ENCODE measurements at regions of chr16 and their contacts with region 1.

Region 1: GRCh38 chr16:22077700-22078313 is 14.5 kb upstream of the VWA3A start:
- DNase-seq: peak in 4 of 5 donors; percentile 49 to 66 (median 58)
- H3K4me3 ChIP-seq: no peak overlapping the region
- H3K27ac ChIP-seq: no peak overlapping the region
- H3K4me1 ChIP-seq: no peaks in the 10 kb centered on the region
- H3K27me3 ChIP-seq: no peaks in the 10 kb centered on the region
- CTCF ChIP-seq: peak; percentile 66

Region 2: DNA sequence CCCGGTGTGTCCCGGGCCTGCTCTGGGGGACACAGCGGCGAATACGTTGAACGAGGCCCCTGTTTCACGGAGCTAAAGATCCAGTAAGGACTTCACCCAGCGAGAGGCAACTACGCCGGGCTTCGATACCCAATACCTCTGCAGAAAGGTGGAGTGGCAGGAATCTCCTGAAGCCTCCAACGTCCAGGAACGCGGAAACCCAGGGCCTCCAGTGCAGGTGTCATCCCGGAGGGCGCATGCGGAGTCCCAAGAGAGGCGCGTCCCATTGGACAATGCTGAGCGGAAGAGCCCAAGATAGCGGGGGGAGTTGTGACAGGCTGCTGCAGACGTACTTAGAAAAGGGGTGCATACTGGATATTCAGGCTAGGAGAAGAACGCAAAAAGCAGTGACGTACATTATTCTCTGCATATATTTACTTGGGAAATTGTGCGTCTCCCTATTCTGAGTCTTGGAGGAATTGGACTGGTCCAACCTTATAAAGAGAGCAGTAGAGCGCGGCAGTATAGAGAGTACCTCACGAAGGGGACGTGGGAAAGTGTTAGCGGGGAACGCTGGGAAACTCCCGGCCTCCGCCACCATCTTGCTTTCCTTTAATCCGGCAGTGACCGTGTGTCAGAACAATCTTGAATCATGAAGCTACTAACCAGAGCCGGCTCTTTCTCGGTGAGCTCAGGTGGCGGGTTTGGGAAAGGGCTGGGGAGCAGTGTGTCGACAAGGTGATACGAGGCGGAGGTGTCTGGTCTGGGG is 124.8 kb before region 1 on chr16 and contains the start of gene UQCRC2:
- intact Hi-C with region 1: no loop called
- DNase-seq: peak; percentile 90 to 98 (median 95)
- H3K4me3 ChIP-seq: peak within 1 kb of the TSS; percentile 74 to 99 (median 95)
- H3K27ac ChIP-seq: peak within 1 kb of the TSS; percentile 96 to 98
- H3K4me1 ChIP-seq: peaks cover 4 to 20% (median 6%) of the 10 kb centered on the region in 3 donors
- H3K27me3 ChIP-seq: no peaks in the 10 kb centered on the region
- CTCF ChIP-seq: no peak
- total RNA-seq, gene UQCRC2: 199 TPM

Region 3: DNA sequence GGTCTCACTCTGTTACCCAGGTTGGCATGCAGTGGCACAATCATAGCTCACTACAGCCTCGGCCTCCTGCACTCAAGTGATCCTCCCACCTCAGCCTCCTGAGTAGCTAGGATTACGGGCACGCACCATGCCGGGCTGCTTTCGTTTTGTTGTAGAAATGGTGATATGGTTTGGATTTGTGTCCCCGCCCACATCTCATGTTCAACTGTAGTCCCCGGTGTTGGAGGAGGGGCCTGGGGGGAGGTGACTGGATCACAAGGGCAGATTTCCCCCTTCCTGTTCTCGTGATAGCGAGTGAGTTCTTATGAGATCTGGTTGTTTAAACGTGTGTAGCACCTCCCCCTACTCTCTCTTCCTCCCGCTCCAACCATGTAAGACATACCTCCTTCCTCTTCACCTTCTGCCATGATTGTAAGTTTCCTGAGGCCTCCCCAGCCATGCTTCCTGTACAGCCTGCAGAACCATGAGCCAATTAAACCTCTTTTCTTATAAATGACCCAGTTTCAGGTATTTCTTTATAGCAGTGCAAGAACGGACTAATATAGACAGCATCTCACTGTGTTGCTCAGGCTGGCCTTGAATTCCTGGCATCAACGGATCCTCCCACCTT is 82.8 kb before region 1 on chr16:
- intact Hi-C with region 1: no loop called
- DNase-seq: no peak
- H3K4me3 ChIP-seq: no peak overlapping the region
- H3K27ac ChIP-seq: no peak overlapping the region
- H3K4me1 ChIP-seq: no peaks in the 10 kb centered on the region
- H3K27me3 ChIP-seq: no peaks in the 10 kb centered on the region
- CTCF ChIP-seq: no peak

Region 4: DNA sequence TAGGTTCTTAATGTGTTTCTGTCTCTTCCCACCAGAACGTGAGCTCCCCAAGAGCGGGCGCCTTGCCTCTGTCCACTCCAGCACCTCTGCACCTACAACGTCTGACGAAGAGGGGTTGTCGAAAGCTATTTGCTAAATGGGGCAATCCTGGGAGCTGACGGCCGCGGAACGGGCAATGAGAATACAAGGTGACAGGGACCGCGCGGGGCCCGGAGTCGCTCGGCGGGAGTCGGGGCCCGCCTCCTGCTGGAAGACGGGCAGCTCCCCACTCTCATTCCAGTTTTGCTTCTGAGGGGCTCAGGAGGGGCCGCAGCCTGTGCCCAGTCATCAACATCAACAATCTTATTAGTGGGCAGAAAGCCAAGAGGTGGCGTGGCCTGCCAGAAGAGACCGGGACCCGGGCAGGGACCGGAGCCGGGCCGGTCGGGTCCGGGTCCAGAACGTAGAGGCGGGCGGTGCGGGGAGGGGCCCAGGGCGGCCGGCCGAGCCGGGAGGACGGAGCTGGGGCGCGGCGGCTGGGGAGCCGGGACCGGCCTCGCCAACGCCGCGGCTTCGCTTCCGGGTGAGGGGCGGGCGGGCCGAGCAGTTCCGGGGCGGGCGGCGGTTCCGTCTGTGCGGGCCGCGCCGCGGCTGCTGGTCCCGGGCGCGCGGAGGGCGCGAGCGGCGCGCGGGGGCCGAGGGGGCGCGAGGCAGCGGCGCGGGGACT is 70.1 kb before region 1 on chr16 and contains the start of gene MOSMO:
- intact Hi-C with region 1: loop called (anchors 5 kb)
- DNase-seq: peak; percentile 59 to 88 (median 73)
- H3K4me3 ChIP-seq: peak within 1 kb of the TSS; percentile 49 to 79 (median 77)
- H3K27ac ChIP-seq: peak within 1 kb of the TSS; percentile 49 to 65
- H3K4me1 ChIP-seq: peaks cover 0 to 8% (median 0%) of the 10 kb centered on the region in 3 donors
- H3K27me3 ChIP-seq: no peaks in the 10 kb centered on the region
- CTCF ChIP-seq: no peak
- total RNA-seq, gene MOSMO: 12.8 TPM